Body of pancreas (tissue), 4 donors: ENCODE measurements at regions of chr5 and their contacts with region 1.

Region 1: GRCh38 chr5:81506900-81507588 is 113.1 kb upstream of the ACOT12 start:
- DNase-seq: peak; percentile 61 to 89 (median 75)
- ATAC-seq: peak; percentile 100
- H3K4me3 ChIP-seq: no peak overlapping the region
- H3K27ac ChIP-seq: peak overlapping the region in 2 of 4 donors; percentile 27 to 59
- H3K4me1 ChIP-seq: peaks cover 4% of the 10 kb centered on the region
- H3K27me3 ChIP-seq: no peaks in the 10 kb centered on the region
- CTCF ChIP-seq: peak; percentile 68 to 98 (median 91)
- POLR2A ChIP-seq: no peak

Region 2: DNA sequence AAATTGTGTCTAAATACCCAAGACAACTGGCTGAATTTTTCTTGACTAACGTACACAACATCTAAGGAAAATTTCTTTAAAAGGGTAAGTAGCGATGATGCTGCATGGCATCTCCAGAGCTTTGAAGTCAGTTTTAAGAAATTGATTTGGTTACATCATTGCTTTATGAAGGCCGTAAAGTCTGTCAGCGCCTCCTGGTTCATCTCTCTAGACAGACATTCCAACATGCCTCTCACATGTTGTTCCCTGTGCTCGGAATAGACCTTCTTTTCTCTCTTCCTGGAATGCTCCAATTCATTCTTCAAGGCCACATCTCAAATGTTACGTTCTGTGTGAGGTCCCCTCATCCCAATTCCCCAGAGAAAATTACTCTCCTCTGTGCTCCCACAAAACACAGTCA is 352.6 kb after region 1 on chr5:
- intact Hi-C with region 1: loop called (anchors 10 kb)
- DNase-seq: no peak
- ATAC-seq: no peak
- H3K4me3 ChIP-seq: no peak overlapping the region
- H3K27ac ChIP-seq: no peak overlapping the region
- H3K4me1 ChIP-seq: peaks cover 13% of the 10 kb centered on the region
- H3K27me3 ChIP-seq: no peaks in the 10 kb centered on the region
- CTCF ChIP-seq: no peak
- POLR2A ChIP-seq: no peak

Region 3: GRCh38 chr5:82174128-82174918 is 667.3 kb after region 1 on chr5:
- intact Hi-C with region 1: loop called (anchors 10 kb)
- DNase-seq: peak; percentile 60 to 82 (median 70)
- ATAC-seq: peak; percentile 60
- H3K4me3 ChIP-seq: no peak overlapping the region
- H3K27ac ChIP-seq: no peak overlapping the region
- H3K4me1 ChIP-seq: no peaks in the 10 kb centered on the region
- H3K27me3 ChIP-seq: no peaks in the 10 kb centered on the region
- CTCF ChIP-seq: peak; percentile 43 to 63 (median 47)
- POLR2A ChIP-seq: no peak